ENCODE measurements at regions of chr17 and their contacts with region 1.

Region 1: GRCh38 chr17:29687596-29687995 is 64.9 kb upstream of the CORO6 start:
- DNase-seq: no peak
- ATAC-seq: no peak
- H3K4me3 ChIP-seq: no peak overlapping the region
- H3K27ac ChIP-seq: no peak overlapping the region
- H3K4me1 ChIP-seq: no peaks in the 10 kb centered on the region; the same call in 1 of the 2 replicates
- H3K27me3 ChIP-seq: no peaks in the 10 kb centered on the region
- CTCF ChIP-seq: no peak

Region 2: GRCh38 chr17:29514792-29515191 is 172.8 kb before region 1 on chr17:
- CTCF ChIA-PET with region 1: no interaction called
- POLR2A ChIA-PET with region 1: no interaction called
- in situ Hi-C with region 1: no loop called
- intact Hi-C with region 1: no loop called
- DNase-seq: no peak
- ATAC-seq: no peak
- H3K4me3 ChIP-seq: no peak overlapping the region
- H3K27ac ChIP-seq: no peak overlapping the region
- H3K4me1 ChIP-seq: no peaks in the 10 kb centered on the region
- H3K27me3 ChIP-seq: no peaks in the 10 kb centered on the region
- CTCF ChIP-seq: no peak

Region 3: DNA sequence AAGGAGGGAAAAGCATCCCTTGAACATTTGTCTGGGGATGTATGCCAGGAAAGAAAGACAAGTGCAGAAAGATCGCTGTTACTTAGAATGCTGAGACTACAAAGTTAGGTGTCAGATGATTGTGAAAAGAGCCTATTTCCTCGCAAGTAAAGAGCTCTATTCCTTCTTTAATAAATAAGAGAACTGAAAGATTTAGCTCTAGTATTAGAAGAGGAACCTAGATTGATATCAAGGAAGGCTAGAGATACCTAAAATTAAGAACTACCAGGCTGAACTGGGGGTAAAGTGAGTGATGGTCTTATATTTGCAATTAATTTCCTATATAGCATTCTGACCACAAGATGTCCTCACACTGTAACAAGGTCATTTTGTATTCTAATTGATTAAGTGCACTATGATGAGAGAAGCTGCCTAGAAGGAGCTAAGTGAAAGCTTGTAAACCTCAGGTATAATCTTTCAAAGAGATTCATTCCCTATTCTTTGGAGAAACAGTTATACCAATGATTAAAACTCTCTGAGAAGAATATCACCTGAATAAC is 180.1 kb after region 1 on chr17:
- CTCF ChIA-PET with region 1: no interaction called
- POLR2A ChIA-PET with region 1: interaction called, 10 read pairs
- in situ Hi-C with region 1: no loop called
- intact Hi-C with region 1: no loop called
- DNase-seq: no peak
- ATAC-seq: no peak
- H3K4me3 ChIP-seq: no peak overlapping the region
- H3K27ac ChIP-seq: no peak overlapping the region
- H3K4me1 ChIP-seq: no peaks in the 10 kb centered on the region; the same call in none of the 2 replicates
- H3K27me3 ChIP-seq: no peaks in the 10 kb centered on the region
- CTCF ChIP-seq: peak; percentile 44; the same call in 1 of the 2 replicates

Region 4: DNA sequence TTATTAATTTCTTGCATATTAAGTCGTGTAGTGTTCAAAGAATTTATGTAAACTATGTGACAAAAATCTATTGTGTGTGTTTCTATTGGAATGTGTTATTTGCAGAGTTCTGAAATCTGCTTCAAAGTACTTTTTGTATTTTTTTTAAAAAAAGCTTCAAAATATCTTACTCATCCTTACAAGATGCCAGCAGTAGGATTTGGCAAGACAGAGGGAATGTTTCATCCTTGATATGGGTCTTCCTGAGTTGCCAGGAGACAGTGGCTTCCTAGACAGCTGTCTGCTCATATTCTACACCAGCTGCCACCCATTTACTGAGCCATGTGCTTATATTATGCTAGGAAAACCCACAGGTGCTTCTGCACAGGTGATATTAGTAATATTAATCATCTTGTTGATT is 290.2 kb after region 1 on chr17:
- CTCF ChIA-PET with region 1: no interaction called
- POLR2A ChIA-PET with region 1: interaction called, 11 read pairs
- in situ Hi-C with region 1: no loop called
- intact Hi-C with region 1: no loop called
- DNase-seq: no peak
- ATAC-seq: no peak
- H3K4me3 ChIP-seq: no peak overlapping the region
- H3K27ac ChIP-seq: no peak overlapping the region
- H3K4me1 ChIP-seq: no peaks in the 10 kb centered on the region
- H3K27me3 ChIP-seq: no peaks in the 10 kb centered on the region
- CTCF ChIP-seq: no peak

Measured in Panc1 (cell line).